Mucosa of descending colon (tissue), 3 donors: ENCODE measurements at regions of chr1 and their contacts with region 1.

Region 1: DNA sequence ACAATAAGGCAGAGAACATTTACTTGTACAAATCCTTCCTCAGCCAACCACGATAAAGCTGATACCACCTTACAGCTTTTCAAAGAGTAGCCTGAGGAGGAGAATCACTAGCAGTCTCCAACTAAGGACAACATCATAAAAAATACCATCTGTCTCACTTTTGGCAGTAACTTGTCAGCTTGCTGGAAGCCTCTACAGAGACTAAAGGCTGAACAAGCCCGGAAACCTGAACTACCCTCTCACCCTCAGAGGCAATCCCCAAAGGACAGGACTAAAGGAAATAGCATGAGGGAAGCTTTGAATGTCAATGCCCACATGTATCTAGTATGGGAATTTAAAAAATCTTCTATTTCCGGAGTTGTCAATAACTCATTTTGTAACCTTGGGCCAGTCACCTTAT is 10.6 kb downstream of the SRSF4 start:
- DNase-seq: no peak
- ATAC-seq: peak; percentile 19
- H3K4me3 ChIP-seq: no peak overlapping the region
- H3K4me1 ChIP-seq: peaks cover 29% of the 10 kb centered on the region
- CTCF ChIP-seq: no peak

Region 2: DNA sequence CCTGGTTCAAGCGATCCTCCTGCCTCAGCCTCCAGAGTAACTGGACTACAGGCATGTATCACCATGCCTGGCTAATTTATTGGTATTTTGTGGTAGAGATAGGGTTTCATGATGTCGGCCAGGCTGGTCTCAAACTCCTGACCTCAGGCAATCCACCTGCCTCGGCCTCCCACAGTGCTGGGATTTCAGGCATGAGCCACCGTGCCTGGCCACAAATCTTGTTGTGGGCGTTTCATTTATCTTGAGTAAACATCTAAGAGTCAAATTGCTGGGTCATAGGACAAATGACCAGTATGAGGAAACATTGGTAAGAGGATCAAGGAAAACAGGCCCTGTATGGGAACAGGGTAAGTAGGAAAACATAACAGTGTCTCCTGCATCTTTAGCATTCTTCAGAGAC is 65.2 kb before region 1 on chr1:
- intact Hi-C with region 1: no loop called
- DNase-seq: no peak
- ATAC-seq: no peak
- H3K4me3 ChIP-seq: no peak overlapping the region
- H3K4me1 ChIP-seq: no peaks in the 10 kb centered on the region
- CTCF ChIP-seq: no peak

Region 3: DNA sequence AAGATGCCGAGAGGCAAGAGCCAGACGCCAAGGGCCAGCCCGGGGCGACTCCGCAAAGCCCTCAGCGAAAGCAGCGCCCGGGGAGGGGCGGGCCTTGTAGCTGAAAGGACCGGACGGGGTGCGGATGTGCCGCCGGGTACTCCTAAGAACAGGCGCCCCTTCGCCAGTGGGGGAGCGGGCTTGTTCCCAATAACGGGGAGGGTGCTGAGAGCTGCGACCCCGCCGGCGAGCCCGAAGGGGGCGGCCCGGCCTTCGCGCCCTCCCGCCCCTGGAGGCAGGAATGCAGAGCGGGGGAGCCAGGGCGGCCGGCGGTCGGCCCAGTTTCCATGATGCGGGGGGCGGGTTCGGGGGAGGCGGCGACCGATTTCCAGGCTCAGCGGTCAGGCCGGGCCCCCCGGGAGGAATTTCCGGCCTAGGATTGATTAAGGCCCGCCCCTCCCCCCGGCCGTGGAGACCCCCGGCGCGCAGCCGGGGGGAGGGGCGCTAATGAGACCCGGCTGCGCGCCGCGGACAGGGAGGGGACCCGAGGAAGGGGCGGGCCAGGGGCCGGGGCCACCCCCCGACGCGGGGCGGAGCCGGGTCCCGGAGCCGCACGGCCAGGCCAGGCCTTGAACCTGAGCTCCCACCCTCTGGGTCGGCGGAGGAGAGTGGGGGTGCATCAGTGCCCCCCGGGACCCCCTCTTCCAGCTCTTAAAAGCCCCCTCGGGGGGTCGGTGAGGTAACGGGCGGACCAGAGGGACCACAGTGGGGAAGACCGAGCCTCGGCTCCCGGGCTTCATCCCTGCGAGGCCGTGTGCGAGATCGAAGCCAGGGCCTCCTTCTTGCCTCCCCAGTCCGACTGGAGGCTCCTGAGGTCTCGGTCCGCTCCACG is 46.5 kb before region 1 on chr1:
- intact Hi-C with region 1: loop called in 1 of 2 experiments (anchors 10 kb)
- DNase-seq: peak; percentile 56 to 75 (median 72)
- ATAC-seq: peak; percentile 44
- H3K4me3 ChIP-seq: no peak overlapping the region
- H3K4me1 ChIP-seq: peaks cover 34% of the 10 kb centered on the region
- CTCF ChIP-seq: no peak

Region 4: GRCh38 chr1:29218223-29218622 is 47.1 kb after region 1 on chr1:
- intact Hi-C with region 1: no loop called
- DNase-seq: no peak
- ATAC-seq: no peak
- H3K4me3 ChIP-seq: no peak overlapping the region
- H3K4me1 ChIP-seq: no peaks in the 10 kb centered on the region
- CTCF ChIP-seq: no peak